HEK293T (cell line): ENCODE measurements at regions of chr1 and their contacts with region 1.

Region 1: GRCh38 chr1:9942939-9943788 is at the starts of genes LZIC and NMNAT1:
- DNase-seq: peak; percentile 94

Region 2: GRCh38 chr1:9842781-9843577 is 100.2 kb before region 1 on chr1:
- CTCF ChIA-PET with region 1: no interaction called
- POLR2A ChIA-PET with region 1: no interaction called
- DNase-seq: no peak

Region 3: GRCh38 chr1:9910425-9911178 is 32.6 kb before region 1 on chr1:
- CTCF ChIA-PET with region 1: no interaction called
- POLR2A ChIA-PET with region 1: interaction called, 12 read pairs
- DNase-seq: peak; percentile 97

Region 4: GRCh38 chr1:9922342-9922741 is 20.8 kb before region 1 on chr1:
- CTCF ChIA-PET with region 1: interaction called, 5 read pairs
- POLR2A ChIA-PET with region 1: interaction called, 10 read pairs
- DNase-seq: peak; percentile 36

Region 5: DNA sequence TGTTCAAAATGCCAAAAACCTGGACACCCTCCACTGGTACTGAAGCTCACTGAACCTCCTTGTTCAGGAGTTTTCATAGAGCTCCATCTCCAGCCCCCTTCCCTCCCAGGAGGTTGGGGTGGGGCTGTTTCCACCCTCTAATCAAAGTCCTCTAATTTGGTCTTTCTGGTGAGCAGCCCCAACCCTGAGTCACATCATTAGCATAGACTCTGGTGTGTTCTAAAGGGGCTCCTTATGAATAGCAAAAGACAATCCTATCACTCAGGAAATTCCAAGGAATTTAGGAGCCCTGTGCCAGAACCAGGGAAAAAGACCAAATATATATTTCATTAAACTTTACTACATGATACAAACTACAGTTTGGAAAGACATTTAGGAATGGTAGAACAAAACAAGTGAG is 76.4 kb after region 1 on chr1:
- CTCF ChIA-PET with region 1: no interaction called
- POLR2A ChIA-PET with region 1: no interaction called
- DNase-seq: no peak

Region 6: GRCh38 chr1:10032590-10033358 is 89.6 kb after region 1 on chr1 and contains the start of gene UBE4B:
- CTCF ChIA-PET with region 1: interaction called, 3 read pairs
- POLR2A ChIA-PET with region 1: interaction called, 38 read pairs
- DNase-seq: peak; percentile 97